Body of pancreas (tissue), 4 donors: ENCODE measurements at regions of chr7 and their contacts with region 1.

Region 1: DNA sequence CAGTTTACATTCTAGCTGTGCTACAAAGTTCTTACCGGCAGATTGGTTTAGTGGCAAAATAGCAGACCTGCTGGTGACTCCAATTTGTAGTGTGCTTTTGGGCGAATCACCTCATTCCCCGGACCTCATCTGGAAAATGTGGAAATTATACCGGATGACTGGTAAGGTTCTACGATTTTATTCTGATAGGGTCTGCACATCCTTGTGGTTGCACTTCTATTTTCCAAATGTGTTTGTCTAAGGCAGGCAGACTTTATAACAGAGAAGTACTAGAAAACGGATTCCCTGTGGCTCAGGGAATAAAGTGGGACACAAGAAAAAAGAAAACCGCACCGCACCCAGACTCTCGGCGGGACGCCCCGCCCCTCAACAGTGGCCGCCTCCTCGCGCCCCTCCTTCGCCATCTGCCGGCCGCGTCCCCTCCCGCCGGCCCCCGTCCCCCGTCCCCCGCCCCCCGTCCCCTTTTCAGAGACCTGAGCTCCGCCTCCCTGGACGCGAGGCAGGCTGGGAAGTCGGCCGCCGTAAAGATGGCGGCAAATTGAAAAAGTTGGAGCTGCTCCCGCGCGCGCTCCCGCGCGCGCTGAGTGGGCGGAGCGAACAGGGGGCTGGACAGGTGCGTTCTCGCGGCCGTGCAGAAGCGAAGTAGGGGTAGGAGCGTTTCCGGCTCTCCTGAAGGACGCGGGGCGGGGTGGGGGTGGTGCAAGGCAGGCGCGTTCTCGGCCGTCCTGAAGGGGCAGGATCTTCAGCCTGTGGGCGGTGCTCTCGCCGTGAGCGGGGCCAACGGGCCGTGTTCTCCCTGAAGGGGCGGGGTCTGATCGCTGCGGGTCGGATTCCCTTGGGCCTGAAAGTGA is 531 bp upstream of the CCM2 start:
- DNase-seq: peak; percentile 100
- ATAC-seq: peak; percentile 93
- H3K4me3 ChIP-seq: peak overlapping the region in 1 of 2 donors; percentile 26
- H3K27ac ChIP-seq: peak overlapping the region; percentile 38 to 92 (median 84)
- H3K4me1 ChIP-seq: peaks cover 20% of the 10 kb centered on the region
- H3K27me3 ChIP-seq: no peaks in the 10 kb centered on the region
- CTCF ChIP-seq: peak in 4 of 7 experiments; percentile 2 to 33 (median 20)
- POLR2A ChIP-seq: peak in 2 of 3 donors; percentile 61 to 63

Region 2: DNA sequence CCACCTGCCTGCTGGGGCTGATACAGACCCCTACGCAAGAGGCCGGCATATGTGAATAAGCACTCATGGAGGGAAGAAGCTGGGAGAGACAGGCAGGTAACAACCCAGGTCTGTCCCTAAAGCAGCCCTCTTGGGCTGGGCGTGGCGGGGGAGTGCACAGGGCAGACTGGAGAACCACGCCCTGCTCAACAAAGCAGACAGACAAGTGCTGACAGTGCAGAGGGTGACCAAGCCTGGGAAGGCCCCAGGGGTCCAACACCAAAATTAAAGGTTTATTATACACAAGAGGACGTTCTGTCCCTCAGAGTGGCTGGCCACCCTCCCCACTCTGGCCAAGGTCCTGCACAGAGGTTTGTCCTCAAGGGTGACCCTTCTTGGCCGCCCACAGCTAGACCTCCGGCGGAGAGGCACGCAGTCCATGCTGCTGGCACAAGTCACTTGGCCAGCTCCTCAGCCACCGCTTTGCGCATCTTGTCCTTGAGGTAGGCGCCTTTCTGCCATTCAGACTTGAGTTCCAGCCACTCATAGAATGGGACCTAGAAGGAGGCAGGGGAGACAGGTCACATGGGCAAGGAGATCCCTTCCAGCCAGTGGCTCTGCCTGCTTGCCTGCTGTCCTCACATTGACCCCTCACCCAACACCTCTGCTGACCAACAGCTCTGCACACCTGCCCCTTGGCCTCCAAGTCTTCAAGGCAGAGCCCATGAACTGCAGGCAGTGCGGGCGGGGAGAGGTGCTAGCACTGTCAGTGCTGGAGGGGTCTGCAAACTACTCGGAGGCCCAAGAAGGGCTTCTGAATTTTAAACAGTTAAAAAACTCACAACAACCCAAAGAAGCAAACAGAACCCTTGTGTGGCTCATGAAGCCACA is 100.7 kb after region 1 on chr7:
- intact Hi-C with region 1: loop called (anchors 10 kb)
- DNase-seq: no peak
- ATAC-seq: no peak
- H3K4me3 ChIP-seq: no peak overlapping the region
- H3K27ac ChIP-seq: no peak overlapping the region
- H3K4me1 ChIP-seq: no peaks in the 10 kb centered on the region
- H3K27me3 ChIP-seq: no peaks in the 10 kb centered on the region
- CTCF ChIP-seq: no peak
- POLR2A ChIP-seq: no peak